ENCODE measurements at regions of chr3 and their contacts with region 1.

Region 1: DNA sequence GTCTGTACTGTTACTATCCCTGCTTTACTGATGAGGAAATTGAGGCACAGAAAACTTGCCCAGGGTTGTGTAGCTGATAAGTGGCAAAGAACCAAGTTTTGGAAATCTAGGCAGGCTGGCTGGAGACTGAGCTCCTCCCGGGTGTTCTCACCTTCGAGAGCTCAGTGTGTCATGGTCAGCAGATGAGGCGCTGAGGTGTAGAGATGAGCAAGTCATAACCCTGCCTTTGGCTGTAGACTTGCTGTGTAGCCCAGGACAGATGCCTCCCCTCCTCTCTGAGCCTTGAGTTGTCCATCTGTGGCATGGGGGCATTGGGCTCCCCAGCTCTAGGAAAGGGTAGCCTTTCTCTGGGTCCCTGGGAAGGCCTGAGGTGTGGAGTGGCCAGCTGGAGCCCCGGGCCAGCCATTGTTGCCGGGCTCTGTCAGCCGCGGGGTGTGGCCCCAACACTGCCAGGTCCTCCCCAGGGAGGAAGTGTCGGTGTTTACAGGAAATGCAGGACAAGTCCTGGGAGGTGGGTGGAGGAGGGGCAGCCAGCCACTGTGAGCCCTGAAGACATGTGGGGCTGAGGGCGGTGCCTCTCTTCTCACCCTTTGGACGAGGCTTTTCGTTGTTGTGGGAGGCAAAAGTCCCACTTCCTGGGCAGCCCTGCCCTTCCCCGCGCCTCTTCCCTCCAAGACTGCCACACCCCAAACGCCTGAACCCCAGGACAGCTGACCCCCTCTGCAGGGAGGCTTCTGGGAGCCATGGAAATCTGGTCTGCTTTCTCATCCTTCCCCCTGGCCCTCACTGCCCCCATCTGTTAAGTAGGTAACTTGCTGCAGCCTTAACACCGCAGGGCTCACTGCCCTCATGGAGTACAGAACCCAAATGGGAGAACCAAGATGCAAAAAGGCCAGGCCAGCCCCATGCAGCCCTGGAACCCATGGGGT is 29.1 kb downstream of the FGD5 start:
- DNase-seq: peak; percentile 84

Region 2: GRCh38 chr3:14879211-14879874 is 31.5 kb after region 1 on chr3:
- intact Hi-C with region 1: no loop called
- DNase-seq: peak; percentile 56

Region 3: GRCh38 chr3:14899993-14900618 is 52.2 kb after region 1 on chr3:
- intact Hi-C with region 1: loop called in 1 of 2 experiments (anchors 2 kb)
- DNase-seq: no peak

Measured in posterior vena cava (tissue), 2 donors.